ENCODE measurements at regions of chr10 and their contacts with region 1.

Region 1: GRCh38 chr10:36211856-36212255 is 569.8 kb upstream of the FZD8 start:
- DNase-seq: no peak
- ATAC-seq: no peak
- H3K4me3 ChIP-seq: no peak overlapping the region
- H3K4me3 Mint-ChIP-seq: no peak overlapping the region
- H3K27ac ChIP-seq: no peak overlapping the region
- H3K27ac Mint-ChIP-seq: no peak overlapping the region
- H3K4me1 ChIP-seq: no peaks in the 10 kb centered on the region
- H3K4me1 Mint-ChIP-seq: no peaks in the 10 kb centered on the region
- H3K27me3 ChIP-seq: no peaks in the 10 kb centered on the region
- H3K27me3 Mint-ChIP-seq: no peaks in the 10 kb centered on the region

Region 2: DNA sequence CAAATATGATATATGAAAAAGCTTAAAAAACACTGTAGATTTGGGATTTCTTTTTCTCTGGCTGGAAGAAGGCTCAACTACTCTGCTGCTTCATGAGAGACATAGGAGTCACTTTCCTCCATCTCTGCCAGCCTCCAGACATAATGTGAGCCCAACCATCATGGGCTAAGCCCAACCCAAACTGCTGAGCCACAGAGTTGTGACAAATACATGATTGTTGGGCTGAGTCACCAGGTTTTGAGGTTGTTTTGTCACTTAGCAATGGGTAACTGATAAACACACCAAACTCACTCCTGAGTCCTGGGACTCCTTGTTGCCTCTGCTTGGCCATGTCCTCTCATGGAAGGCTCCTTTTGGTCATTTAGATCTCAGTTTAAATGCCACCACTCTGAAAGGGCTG is 187.9 kb before region 1 on chr10:
- CTCF ChIA-PET with region 1: no interaction called
- POLR2A ChIA-PET with region 1: no interaction called
- DNase-seq: no peak
- ATAC-seq: no peak
- H3K4me3 ChIP-seq: no peak overlapping the region
- H3K4me3 Mint-ChIP-seq: no peak overlapping the region
- H3K27ac ChIP-seq: no peak overlapping the region
- H3K27ac Mint-ChIP-seq: no peak overlapping the region
- H3K4me1 ChIP-seq: no peaks in the 10 kb centered on the region
- H3K4me1 Mint-ChIP-seq: no peaks in the 10 kb centered on the region
- H3K27me3 ChIP-seq: no peaks in the 10 kb centered on the region
- H3K27me3 Mint-ChIP-seq: no peaks in the 10 kb centered on the region

Region 3: DNA sequence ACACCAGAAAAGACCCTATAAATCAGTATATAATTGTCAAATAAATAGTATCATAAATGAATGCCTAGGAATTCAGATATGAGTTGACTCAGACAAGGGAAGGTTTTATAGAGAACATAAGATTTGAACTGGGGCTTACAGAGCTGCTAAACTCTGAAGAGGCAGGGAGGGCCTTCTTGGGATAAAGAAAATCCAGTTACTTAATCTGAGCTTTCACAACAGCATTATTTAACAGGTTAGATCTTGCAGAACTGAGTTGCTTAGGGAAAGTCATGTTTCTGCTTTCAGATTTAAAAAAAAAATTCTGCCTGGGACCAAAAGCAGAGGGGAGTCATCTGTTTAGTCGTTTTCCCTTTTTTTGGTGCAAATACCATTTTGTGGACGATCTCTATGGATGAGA is 25.1 kb after region 1 on chr10:
- CTCF ChIA-PET with region 1: interaction called in 1 of 2 experiments, 14 read pairs
- POLR2A ChIA-PET with region 1: no interaction called
- DNase-seq: no peak
- ATAC-seq: no peak
- H3K4me3 ChIP-seq: no peak overlapping the region
- H3K4me3 Mint-ChIP-seq: no peak overlapping the region
- H3K27ac ChIP-seq: no peak overlapping the region
- H3K27ac Mint-ChIP-seq: no peak overlapping the region
- H3K4me1 ChIP-seq: no peaks in the 10 kb centered on the region
- H3K4me1 Mint-ChIP-seq: no peaks in the 10 kb centered on the region
- H3K27me3 ChIP-seq: no peaks in the 10 kb centered on the region
- H3K27me3 Mint-ChIP-seq: no peaks in the 10 kb centered on the region

Region 4: DNA sequence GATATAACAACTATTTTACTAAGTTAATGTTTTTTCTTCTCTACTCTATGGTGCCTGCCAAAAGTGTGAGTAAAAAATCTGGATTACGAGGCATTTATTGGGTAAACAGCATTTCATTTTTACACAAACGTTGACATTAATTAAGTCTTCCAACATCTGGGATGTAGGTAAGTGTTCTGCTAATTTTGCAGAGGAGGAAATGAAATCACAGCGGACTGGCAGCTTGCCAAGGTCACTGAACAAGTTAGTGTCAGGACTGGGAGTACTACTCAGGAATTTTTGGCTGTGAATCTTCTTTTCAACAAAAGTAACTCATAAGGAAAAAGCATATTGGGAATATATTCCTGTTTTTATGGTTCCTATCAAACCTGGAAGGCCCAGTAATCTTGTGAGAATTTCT is 42.3 kb after region 1 on chr10:
- CTCF ChIA-PET with region 1: no interaction called
- POLR2A ChIA-PET with region 1: no interaction called
- DNase-seq: no peak
- ATAC-seq: no peak
- H3K4me3 ChIP-seq: no peak overlapping the region
- H3K4me3 Mint-ChIP-seq: no peak overlapping the region
- H3K27ac ChIP-seq: no peak overlapping the region
- H3K27ac Mint-ChIP-seq: no peak overlapping the region
- H3K4me1 ChIP-seq: no peaks in the 10 kb centered on the region
- H3K4me1 Mint-ChIP-seq: no peaks in the 10 kb centered on the region
- H3K27me3 ChIP-seq: no peaks in the 10 kb centered on the region
- H3K27me3 Mint-ChIP-seq: no peaks in the 10 kb centered on the region

Measured in T-cell (primary cell).